Activated CD4-positive, alpha-beta memory T cell treated with anti-CD3 and anti-CD28 coated beads for 36 hours (primary cell): ENCODE measurements at regions of chr1 and their contacts with region 1.

Region 1: DNA sequence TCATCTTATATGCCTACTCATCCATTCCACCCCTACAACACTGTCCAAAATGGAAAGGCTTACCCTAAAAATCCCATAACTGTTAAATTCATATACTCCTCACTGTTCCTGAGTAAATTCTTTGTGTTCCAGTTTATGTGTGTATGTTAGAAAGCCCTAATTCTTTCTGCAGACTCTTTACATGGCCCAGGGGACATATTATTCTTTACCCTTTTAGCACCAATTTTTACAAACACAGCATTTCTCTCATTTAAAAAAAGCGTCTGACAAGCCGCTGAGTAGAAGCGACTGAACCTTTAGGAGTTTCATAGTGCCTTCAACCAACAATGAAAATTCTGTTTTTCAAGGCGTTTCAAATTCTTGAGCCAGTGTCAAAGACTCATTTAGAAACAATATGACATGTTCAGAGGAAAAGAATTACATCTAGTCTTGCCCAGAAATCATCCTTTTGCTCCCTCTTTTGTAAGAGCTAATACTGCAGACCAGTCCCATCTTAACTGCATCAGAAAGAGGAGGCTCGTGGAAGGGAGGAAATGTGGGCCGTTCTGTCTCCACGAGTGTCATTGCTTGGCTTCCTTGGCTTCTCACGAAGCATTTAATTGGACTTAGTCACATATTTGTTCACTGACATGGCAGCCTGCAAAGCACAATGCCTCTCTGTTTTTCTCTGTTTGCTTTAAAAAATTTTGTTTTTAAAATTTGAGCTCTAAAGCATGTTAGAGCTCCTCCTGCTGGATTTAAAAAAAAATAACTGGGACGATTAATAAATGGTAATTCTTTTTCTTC is 21.3 kb upstream of the C1orf105 start:
- DNase-seq: peak; percentile 41
- H3K4me3 Mint-ChIP-seq: peak overlapping the region; percentile 15
- H3K27ac Mint-ChIP-seq: peak overlapping the region; percentile 72
- H3K4me1 Mint-ChIP-seq: peaks cover 67% of the 10 kb centered on the region
- H3K27me3 Mint-ChIP-seq: no peaks in the 10 kb centered on the region

Region 2: DNA sequence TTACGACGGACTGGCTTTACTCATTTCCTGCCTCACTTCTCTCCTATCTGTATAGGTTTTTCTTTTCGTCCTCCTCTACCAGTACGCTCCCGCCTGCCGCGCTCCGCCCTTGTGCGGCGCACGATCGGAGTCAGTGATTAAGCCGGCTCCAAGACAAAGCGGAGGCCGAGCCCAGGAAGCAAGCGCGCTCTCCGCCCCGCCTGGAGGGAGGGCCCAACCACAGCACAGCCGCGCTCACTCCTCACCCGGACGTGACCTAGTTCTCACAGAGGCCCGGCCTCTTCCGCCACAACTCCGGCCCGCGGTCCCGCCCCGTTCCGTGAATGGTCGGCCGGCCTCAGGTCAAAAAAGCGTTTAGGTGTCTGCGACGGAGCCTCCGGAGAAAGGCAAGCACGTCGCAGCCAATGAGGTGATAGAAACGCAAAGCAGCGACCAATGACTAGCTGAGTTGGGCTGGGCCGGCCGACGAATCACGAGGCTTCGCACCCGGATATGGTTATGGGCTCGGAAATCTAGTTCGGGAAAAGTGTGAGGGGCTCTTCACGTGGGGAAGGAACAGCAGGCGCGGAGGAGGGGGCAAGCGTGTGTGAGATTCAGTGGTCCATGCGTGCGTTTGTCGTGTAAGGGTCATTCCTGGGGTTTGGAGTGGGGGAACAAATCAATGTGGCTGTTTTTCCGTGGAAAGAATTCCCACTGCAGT is 617.8 kb before region 1 on chr1 and contains the start of gene METTL13:
- CTCF ChIA-PET with region 1: no interaction called
- POLR2A ChIA-PET with region 1: no interaction called
- intact Hi-C with region 1: loop called (anchors 1 kb)
- DNase-seq: peak; percentile 99
- H3K4me3 Mint-ChIP-seq: peak within 1 kb of the TSS; percentile 96
- H3K27ac Mint-ChIP-seq: peak within 1 kb of the TSS; percentile 94
- H3K4me1 Mint-ChIP-seq: peaks cover 59% of the 10 kb centered on the region
- H3K27me3 Mint-ChIP-seq: no peaks in the 10 kb centered on the region
- total RNA-seq, gene METTL13: 45.6 to 49.8 TPM

Region 3: GRCh38 chr1:172089768-172090510 is 309.2 kb before region 1 on chr1:
- CTCF ChIA-PET with region 1: interaction called, 47 read pairs
- POLR2A ChIA-PET with region 1: interaction called, 3 read pairs
- intact Hi-C with region 1: loop called (anchors 1 kb)
- DNase-seq: peak; percentile 79
- H3K4me3 Mint-ChIP-seq: no peak overlapping the region
- H3K27ac Mint-ChIP-seq: no peak overlapping the region
- H3K4me1 Mint-ChIP-seq: peaks cover 2% of the 10 kb centered on the region
- H3K27me3 Mint-ChIP-seq: no peaks in the 10 kb centered on the region

Region 4: DNA sequence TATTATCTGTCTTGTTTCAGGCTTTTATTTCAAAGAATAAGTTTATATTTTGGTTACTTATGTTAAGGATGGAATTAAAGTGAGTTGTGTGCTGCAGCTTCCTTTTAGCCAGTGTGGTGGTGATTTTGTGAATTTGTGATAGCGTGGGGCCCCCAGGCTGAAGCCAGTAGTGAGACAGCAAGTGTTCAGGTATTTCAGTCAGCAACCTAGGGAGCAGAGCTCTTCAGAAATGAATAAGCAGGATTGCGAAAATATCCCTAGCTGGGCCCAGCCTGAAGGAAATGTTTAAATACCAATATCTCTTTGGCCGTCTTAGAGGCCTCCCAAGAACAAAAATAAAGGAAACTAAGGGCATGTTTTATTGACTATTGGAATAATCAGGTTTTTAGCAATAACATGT is 129.5 kb before region 1 on chr1:
- CTCF ChIA-PET with region 1: interaction called, 3 read pairs
- POLR2A ChIA-PET with region 1: no interaction called
- intact Hi-C with region 1: loop called (anchors 1 kb)
- DNase-seq: peak; percentile 41
- H3K4me3 Mint-ChIP-seq: no peak overlapping the region
- H3K27ac Mint-ChIP-seq: peak overlapping the region; percentile 49
- H3K4me1 Mint-ChIP-seq: peaks cover 48% of the 10 kb centered on the region
- H3K27me3 Mint-ChIP-seq: no peaks in the 10 kb centered on the region

Region 5: GRCh38 chr1:172380441-172381244 is 18.5 kb before region 1 on chr1:
- CTCF ChIA-PET with region 1: interaction called, 10 read pairs
- POLR2A ChIA-PET with region 1: interaction called, 3 read pairs
- intact Hi-C with region 1: loop called (anchors 1 kb)
- DNase-seq: peak; percentile 45
- H3K4me3 Mint-ChIP-seq: peak overlapping the region; percentile 48
- H3K27ac Mint-ChIP-seq: peak overlapping the region; percentile 83
- H3K4me1 Mint-ChIP-seq: peaks cover 28% of the 10 kb centered on the region
- H3K27me3 Mint-ChIP-seq: no peaks in the 10 kb centered on the region

Region 6: DNA sequence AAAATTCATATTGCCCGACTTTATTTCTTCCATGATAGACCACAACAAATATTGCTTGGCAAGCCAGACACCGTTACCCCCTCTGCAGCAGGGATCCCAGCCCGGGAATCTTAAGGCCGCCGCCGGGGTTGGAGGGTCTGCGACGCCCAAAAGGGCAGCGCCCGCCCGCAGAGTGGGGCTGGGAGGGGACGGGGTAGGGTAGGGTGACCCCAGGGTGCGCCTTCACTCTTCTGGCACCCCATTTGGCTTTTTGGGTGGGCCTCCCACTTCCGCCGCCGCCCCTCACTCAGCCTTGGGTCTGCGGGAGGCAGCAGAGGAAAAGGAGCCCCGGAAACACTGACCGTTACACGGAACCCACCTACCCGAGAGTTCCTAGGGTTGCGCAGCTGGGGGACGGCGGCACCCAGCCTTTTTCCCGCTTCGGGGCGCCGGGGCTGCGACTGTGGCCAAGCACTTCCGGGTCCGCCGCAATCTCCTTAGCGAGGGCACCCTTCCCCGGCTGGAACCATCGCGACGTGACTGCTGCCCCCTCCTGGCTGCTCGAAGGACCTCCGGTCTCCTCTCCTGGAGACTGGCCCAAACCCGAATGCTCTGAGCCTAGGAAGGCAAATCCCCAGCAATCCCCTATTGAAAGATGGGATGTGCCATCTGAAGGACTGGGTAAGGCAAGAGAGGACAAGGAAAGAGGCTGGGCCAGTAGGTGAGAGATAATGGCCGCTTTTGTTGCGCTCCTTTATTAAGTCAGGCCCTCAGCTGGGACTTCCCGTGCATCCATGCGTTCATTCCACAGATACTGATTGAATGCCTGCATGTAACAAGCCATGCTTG is 44.7 kb after region 1 on chr1 and contains the start of gene PIGC:
- CTCF ChIA-PET with region 1: interaction called, 8 read pairs
- POLR2A ChIA-PET with region 1: no interaction called
- intact Hi-C with region 1: loop called (anchors 2 kb)
- DNase-seq: peak; percentile 95
- H3K4me3 Mint-ChIP-seq: peak within 1 kb of the TSS; percentile 87
- H3K27ac Mint-ChIP-seq: peak within 1 kb of the TSS; percentile 83
- H3K4me1 Mint-ChIP-seq: peaks cover 38% of the 10 kb centered on the region
- H3K27me3 Mint-ChIP-seq: no peaks in the 10 kb centered on the region
- total RNA-seq, gene PIGC: 16.6 to 17.4 TPM